ENCODE measurements at regions of chr17 and their contacts with region 1.

Region 1: GRCh38 chr17:28371245-28372202 is at the start of gene SARM1:
- DNase-seq: peak; percentile 85
- H3K4me3 Mint-ChIP-seq: peak within 1 kb of the TSS; percentile 89
- H3K27ac Mint-ChIP-seq: peak within 1 kb of the TSS; percentile 47
- H3K4me1 Mint-ChIP-seq: peaks cover 21% of the 10 kb centered on the region
- H3K27me3 Mint-ChIP-seq: no peaks in the 10 kb centered on the region
- total RNA-seq, gene SARM1: 11.7 to 12.3 TPM

Region 2: DNA sequence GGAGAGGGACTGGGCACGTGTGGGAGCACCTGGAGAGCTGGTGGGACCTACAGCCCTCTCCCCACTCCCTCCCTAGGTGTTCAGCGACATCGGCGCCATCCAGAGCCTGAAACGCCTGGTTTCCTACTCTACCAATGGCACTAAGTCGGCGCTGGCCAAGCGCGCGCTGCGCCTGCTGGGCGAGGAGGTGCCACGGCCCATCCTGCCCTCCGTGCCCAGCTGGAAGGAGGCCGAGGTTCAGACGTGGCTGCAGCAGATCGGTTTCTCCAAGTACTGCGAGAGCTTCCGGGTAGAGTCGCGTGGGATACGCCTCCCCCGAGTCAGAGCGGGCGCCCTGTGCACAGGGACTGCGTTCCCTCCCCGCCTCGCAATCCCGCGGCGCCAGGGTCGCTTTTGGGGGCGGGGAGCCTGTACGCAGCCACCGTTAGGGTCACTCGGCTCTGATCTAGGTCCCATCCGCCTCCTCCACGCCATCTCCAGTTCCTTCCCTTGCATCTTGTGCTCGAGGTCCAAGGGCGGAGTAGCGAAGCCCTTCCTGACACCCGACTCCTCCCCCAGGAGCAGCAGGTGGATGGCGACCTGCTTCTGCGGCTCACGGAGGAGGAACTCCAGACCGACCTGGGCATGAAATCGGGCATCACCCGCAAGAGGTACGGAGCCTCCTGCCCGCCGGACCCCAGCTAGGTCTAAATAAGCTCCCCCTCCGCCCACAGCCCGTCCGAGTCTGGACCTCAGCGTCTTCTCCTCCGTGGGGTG is 12.9 kb after region 1 on chr17:
- CTCF ChIA-PET with region 1: interaction called, 6 read pairs
- intact Hi-C with region 1: loop called (anchors 1 kb)
- DNase-seq: peak; percentile 81
- H3K4me3 Mint-ChIP-seq: peak overlapping the region; percentile 87
- H3K27ac Mint-ChIP-seq: peak overlapping the region; percentile 9
- H3K4me1 Mint-ChIP-seq: peaks cover 23% of the 10 kb centered on the region
- H3K27me3 Mint-ChIP-seq: peaks cover 12% of the 10 kb centered on the region

Region 3: DNA sequence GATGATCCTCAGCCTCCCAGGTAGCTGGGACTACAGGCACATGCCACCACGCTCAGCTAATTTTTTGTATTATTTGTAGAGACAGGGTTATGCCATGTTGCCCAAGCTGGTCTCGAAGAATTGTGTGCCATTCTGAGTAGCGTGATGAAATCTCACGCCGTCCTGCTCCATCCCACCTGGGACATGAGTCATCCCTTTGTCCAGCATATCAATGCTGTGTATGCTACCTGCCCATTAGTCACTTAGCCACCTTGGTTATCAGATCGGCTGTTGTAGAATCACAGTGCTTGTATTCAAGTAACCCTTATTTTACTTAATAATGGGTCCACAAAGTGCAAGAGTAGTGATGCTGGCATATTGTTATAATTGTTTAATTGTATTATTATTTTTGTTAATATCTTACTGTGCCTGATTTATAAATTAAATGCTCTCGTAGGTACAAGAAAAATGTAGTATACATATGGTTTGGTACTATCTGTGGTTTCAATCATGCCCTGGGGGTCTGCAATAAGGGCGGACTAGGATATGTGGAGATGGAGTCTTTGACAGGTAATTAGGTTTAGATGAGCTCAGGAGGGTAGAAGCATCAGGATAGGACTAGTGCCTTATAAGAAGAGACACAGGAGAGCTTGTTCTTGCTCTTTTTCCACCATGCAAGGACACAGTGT is 75.3 kb after region 1 on chr17:
- CTCF ChIA-PET with region 1: no interaction called
- intact Hi-C with region 1: no loop called
- DNase-seq: no peak
- H3K4me3 Mint-ChIP-seq: no peak overlapping the region
- H3K27ac Mint-ChIP-seq: no peak overlapping the region
- H3K4me1 Mint-ChIP-seq: no peaks in the 10 kb centered on the region
- H3K27me3 Mint-ChIP-seq: peaks cover 5% of the 10 kb centered on the region

Region 4: GRCh38 chr17:28623696-28624095 is 252.2 kb after region 1 on chr17:
- CTCF ChIA-PET with region 1: no interaction called
- intact Hi-C with region 1: no loop called
- DNase-seq: no peak
- H3K4me3 Mint-ChIP-seq: no peak overlapping the region
- H3K27ac Mint-ChIP-seq: no peak overlapping the region
- H3K4me1 Mint-ChIP-seq: peaks cover 7% of the 10 kb centered on the region
- H3K27me3 Mint-ChIP-seq: no peaks in the 10 kb centered on the region

Region 5: DNA sequence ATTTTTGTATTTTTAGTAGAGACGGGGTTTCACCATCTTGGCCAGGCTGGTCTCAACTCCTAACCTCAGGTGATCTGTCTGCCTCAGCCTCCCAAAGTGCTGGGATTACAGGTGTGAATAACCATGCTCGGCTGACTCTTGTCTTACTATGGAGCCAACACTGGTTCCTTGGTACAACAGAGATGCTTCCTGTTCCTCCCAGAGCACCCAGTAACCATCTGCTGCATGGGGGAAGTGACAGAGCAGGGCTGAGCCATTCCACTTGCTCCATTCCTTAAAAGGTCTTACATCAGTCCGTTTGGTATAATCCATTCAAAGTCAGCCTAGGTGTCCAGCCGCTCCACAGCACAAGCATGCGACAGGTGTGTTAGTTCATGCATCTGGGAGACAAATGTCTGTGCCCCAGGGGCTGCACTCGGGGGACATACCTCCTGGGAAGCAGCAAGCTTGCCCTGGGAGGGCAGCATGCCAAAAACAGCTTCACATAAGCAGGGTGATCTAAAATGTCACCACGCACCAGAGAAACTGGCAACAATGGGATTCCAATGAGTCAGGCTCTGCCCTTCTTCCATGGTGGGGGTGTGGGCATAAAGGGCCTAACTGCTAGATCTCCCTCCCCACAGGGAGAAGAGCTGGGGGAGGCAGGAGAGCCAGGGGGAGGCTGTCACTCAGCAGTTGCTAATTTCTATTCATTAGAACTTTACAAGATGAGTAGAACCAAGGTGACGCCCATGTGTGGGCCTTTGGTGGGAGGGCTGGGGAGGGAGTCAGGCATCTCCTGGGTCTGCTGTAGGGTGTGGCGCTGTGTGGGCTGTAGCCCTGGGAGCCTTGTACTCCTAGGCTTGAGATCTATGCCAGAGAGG is 706.9 kb after region 1 on chr17:
- CTCF ChIA-PET with region 1: no interaction called
- intact Hi-C with region 1: no loop called
- DNase-seq: no peak
- H3K4me3 Mint-ChIP-seq: no peak overlapping the region
- H3K27ac Mint-ChIP-seq: no peak overlapping the region
- H3K4me1 Mint-ChIP-seq: no peaks in the 10 kb centered on the region
- H3K27me3 Mint-ChIP-seq: no peaks in the 10 kb centered on the region